Activated CD8-positive, alpha-beta T cell treated with anti-CD3 and anti-CD28 coated beads, Interleukin-2, amount 10 ng/mL, durations not matched to agents 7 days and 5 days (primary cell): ENCODE measurements at regions of chrX and their contacts with region 1.

Region 1: GRCh38 chrX:31658360-31658759 is 586.5 kb upstream of the FTHL17 start:
- DNase-seq: no peak
- ATAC-seq: no peak
- H3K4me3 Mint-ChIP-seq: no peak overlapping the region
- H3K27ac Mint-ChIP-seq: no peak overlapping the region
- H3K4me1 Mint-ChIP-seq: no peaks in the 10 kb centered on the region
- H3K27me3 Mint-ChIP-seq: no peaks in the 10 kb centered on the region

Region 2: DNA sequence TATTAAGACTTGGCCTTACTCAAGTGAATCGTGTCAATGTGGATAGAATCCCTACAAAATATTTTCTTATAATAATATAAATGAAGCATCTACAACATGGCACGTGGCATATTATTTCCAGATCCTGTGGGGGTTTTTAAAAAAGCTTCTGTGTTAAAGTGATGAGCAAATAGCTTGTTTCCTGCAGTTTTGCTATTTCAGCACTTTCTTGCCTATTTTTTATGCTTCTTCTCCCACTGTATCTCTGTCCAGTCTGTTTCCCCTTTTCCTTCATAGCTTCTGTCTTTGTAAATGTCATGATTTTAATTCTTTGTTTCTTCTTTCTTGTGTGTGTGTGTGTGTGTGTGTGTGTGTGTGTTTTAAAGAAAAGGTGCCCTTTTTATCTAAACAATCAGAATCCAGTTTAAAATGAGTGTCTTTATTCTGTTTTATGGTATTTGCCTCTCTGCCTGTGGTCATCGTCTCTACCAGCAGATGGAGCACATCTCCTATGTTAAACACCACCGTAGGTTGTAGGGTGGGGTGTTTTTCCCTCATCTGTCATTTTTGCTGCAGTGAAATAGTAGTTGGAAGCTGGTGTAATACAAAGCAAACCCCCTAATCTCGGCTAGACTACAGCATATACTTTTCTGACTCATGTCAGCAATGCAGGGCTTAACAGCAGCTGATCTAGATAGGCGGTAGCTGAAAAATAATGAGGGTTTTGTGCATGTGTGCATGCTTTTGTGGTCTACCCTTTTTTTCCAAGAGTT is 619.6 kb before region 1 on chrX:
- CTCF ChIA-PET with region 1: interaction called, 12 read pairs
- POLR2A ChIA-PET with region 1: no interaction called
- DNase-seq: peak; percentile 39
- ATAC-seq: no peak
- H3K4me3 Mint-ChIP-seq: no peak overlapping the region
- H3K27ac Mint-ChIP-seq: no peak overlapping the region
- H3K4me1 Mint-ChIP-seq: peaks cover 6% of the 10 kb centered on the region
- H3K27me3 Mint-ChIP-seq: no peaks in the 10 kb centered on the region

Region 3: GRCh38 chrX:31619653-31620052 is 38.7 kb before region 1 on chrX:
- CTCF ChIA-PET with region 1: no interaction called
- POLR2A ChIA-PET with region 1: no interaction called
- DNase-seq: no peak
- ATAC-seq: no peak
- H3K4me3 Mint-ChIP-seq: no peak overlapping the region
- H3K27ac Mint-ChIP-seq: no peak overlapping the region
- H3K4me1 Mint-ChIP-seq: no peaks in the 10 kb centered on the region
- H3K27me3 Mint-ChIP-seq: no peaks in the 10 kb centered on the region